ENCODE measurements at regions of chr6 and their contacts with region 1.

Region 1: DNA sequence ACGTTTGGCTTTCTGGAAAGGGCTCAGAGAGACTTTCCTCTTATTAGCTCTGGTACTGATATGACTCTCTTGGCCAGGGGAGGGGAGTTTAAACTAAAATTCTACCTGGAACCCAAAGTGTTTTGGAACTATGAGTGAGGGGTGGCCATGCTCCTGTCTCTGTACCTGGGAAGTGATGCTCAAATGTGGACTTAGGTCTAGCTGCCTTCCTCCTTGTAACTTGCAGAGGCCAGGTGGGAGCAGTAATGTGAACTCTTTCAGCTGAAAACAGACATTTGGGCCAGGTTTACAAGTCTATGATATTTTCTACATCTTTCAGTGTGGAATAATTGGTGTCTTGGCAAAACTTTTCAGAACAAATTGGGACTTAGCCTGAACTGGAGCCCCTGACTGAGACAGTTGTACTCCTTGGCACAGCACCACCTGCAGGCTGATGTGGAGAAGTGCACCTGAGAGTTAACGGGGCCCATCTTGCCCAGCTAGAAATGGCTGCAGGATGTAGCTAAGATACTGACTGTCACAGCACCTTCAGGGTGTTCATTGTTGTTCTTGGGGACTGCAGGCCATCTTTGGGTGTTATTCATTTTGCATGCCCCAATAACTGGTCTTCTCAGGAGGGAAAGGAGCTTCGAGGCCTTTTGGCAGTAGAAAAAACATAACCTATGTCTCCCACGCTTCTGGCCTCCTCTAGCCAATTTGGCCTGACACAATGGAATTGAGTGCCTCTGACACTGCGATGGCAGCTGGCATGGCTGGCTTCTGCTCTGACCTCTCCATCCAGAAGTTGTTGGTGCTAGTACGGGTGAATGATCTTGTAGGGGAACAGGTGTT is 37.1 kb downstream of the CD109 start:
- DNase-seq: peak; percentile 79
- H3K4me3 Mint-ChIP-seq: no peak overlapping the region
- H3K27ac Mint-ChIP-seq: no peak overlapping the region
- H3K4me1 Mint-ChIP-seq: peaks cover 7% of the 10 kb centered on the region
- H3K27me3 Mint-ChIP-seq: no peaks in the 10 kb centered on the region

Region 2: GRCh38 chr6:73653571-73654424 is 79.3 kb before region 1 on chr6 and contains the start of gene SLC17A5:
- CTCF ChIA-PET with region 1: interaction called, 15 read pairs
- DNase-seq: peak; percentile 93
- H3K4me3 Mint-ChIP-seq: peak within 1 kb of the TSS; percentile 98
- H3K27ac Mint-ChIP-seq: peak within 1 kb of the TSS; percentile 96
- H3K4me1 Mint-ChIP-seq: peaks cover 30% of the 10 kb centered on the region
- H3K27me3 Mint-ChIP-seq: no peaks in the 10 kb centered on the region

Region 3: DNA sequence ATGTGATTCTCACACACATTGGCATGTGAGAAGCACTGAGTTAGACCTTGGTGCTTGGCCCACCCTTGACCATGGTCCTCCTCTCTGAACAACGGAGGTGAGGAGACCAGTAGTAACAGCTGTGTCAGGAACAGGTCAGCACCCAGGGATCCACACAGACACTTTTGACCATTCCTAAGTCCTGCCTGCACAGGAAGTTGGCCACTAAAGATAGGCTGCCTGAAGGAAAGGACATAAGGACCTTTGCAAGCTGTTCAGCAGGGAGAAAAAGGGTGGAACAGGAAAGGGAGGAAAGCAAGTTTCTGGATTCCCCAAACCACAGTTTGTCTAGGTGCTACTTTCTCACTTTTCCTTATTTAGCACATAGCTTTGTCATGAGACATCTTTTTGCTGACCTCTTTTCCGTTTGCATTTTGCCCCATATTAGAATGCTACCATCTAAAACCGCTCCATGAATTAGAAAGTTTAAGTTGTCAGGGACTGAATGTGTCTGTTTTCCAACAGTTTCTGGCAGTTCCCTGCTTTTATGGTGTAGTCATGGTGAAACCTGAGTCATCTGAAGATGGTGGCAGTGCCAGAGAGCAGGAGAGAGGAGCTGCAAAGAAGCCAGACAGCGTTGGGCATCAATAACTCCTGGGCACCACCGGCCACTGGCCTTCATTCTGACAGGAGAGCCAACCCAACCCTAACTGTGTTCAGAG is 38.2 kb before region 1 on chr6:
- CTCF ChIA-PET with region 1: interaction called, 20 read pairs
- DNase-seq: peak; percentile 23
- H3K4me3 Mint-ChIP-seq: peak overlapping the region; percentile 90
- H3K27ac Mint-ChIP-seq: peak overlapping the region; percentile 94
- H3K4me1 Mint-ChIP-seq: peaks cover 42% of the 10 kb centered on the region
- H3K27me3 Mint-ChIP-seq: peaks cover 13% of the 10 kb centered on the region

Region 4: DNA sequence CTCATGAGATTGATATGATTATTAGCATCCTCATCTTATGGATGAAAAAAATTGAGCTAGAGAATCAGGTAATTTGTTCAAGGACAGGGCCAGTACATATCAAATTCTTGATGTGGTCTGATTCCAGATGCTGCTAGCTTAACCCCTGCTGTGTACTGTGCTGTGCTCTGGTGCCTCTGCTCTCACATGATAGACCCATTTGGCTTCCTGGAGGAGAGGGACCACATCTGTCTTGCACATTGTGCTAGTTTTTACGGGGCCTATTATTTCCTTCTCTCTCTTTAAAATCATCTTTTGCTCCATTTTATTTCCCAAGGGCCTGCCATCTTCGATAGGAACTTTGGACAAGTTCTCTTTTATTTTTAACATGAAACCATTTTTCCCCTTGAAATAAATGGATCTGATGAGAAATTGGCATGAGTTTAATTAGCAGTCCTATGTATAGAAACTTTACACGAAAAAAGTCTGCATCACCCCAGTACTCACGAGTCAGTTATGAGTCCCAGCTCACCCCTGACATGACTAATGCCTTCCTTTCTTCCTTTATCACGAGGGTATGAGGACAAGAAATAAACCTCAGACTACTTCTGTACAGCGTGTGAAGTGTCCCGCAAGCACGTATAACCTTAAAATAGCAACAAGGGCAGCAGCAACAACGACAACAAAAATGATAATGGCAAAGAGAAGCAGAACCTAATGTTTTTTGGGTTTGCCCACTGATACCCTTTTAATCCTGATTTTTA is 10.6 kb before region 1 on chr6:
- CTCF ChIA-PET with region 1: interaction called, 23 read pairs
- DNase-seq: no peak
- H3K4me3 Mint-ChIP-seq: no peak overlapping the region
- H3K27ac Mint-ChIP-seq: peak overlapping the region; percentile 47
- H3K4me1 Mint-ChIP-seq: peaks cover 23% of the 10 kb centered on the region
- H3K27me3 Mint-ChIP-seq: no peaks in the 10 kb centered on the region

Measured in activated naive CD4-positive, alpha-beta T cell treated with anti-CD3 and anti-CD28 coated beads, Interleukin-2, amount 10 ng/mL, durations not matched to agents 7 days and 5 days (primary cell).